ENCODE measurements at regions of chr11 and their contacts with region 1.

Region 1: GRCh38 chr11:95254131-95254704 is 23.2 kb upstream of the SESN3 start:
- DNase-seq: peak; percentile 77 to 81
- H3K4me3 ChIP-seq: peak overlapping the region; percentile 1; the same call in 1 of the 2 replicates
- H3K4me3 Mint-ChIP-seq: peak overlapping the region; percentile 67
- H3K27ac Mint-ChIP-seq: no peak overlapping the region
- H3K4me1 ChIP-seq: peaks cover 42% of the 10 kb centered on the region
- H3K4me1 Mint-ChIP-seq: peaks cover 30% of the 10 kb centered on the region
- H3K27me3 ChIP-seq: no peaks in the 10 kb centered on the region
- H3K27me3 Mint-ChIP-seq: no peaks in the 10 kb centered on the region
- CTCF ChIP-seq: no peak

Region 2: DNA sequence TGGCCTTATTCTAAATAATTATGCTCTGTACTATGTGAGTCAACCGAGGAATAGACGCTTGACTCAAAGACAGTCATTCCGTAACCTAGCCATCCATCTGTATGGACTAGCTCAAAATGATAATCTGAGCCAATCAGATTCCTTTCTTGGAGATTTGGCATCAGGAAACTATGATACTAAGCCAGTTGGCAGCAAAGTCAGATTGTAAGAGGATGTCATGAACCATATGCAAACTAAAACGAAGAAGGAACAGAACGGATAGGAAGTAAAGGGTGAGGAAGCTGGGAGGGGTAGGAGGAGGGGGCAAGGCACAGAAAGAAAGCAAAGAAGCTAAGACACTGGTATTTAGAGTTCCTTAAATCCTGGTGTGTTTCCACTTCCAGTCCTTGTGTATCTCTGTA is 12.5 kb before region 1 on chr11:
- CTCF ChIA-PET with region 1: interaction called, 3 read pairs
- POLR2A ChIA-PET with region 1: no interaction called
- intact Hi-C with region 1: loop called (anchors 1 kb)
- DNase-seq: no peak
- H3K4me3 ChIP-seq: no peak overlapping the region
- H3K4me3 Mint-ChIP-seq: no peak overlapping the region
- H3K27ac Mint-ChIP-seq: peak overlapping the region; percentile 72
- H3K4me1 ChIP-seq: peaks cover 45% of the 10 kb centered on the region
- H3K4me1 Mint-ChIP-seq: peaks cover 31% of the 10 kb centered on the region
- H3K27me3 ChIP-seq: no peaks in the 10 kb centered on the region
- H3K27me3 Mint-ChIP-seq: no peaks in the 10 kb centered on the region
- CTCF ChIP-seq: no peak

Region 3: DNA sequence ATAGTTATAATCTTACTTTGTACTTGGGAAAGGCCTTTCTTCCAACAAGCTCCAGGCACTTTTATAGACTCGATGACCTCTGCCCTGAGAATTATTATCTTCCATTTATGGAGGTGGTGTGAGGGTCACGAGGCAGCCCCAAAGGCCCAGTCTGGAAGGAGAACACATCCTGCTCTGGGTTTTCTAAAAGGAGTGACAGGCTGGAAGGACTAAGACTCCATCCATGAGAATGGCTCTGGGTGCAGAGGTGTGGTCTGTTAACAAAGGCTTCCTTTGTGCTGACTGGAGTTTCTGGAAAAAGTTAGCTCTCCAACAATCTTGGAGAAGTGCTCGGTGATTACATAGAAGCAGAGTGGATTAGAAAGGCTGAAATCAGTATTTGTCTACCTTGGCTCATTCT is 51.5 kb after region 1 on chr11:
- CTCF ChIA-PET with region 1: no interaction called
- POLR2A ChIA-PET with region 1: no interaction called
- intact Hi-C with region 1: loop called (anchors 2 kb)
- DNase-seq: no peak
- H3K4me3 ChIP-seq: no peak overlapping the region
- H3K4me3 Mint-ChIP-seq: no peak overlapping the region
- H3K27ac Mint-ChIP-seq: no peak overlapping the region
- H3K4me1 ChIP-seq: no peaks in the 10 kb centered on the region
- H3K4me1 Mint-ChIP-seq: no peaks in the 10 kb centered on the region
- H3K27me3 ChIP-seq: no peaks in the 10 kb centered on the region
- H3K27me3 Mint-ChIP-seq: no peaks in the 10 kb centered on the region
- CTCF ChIP-seq: no peak

Region 4: GRCh38 chr11:95322546-95322945 is 68.3 kb after region 1 on chr11:
- CTCF ChIA-PET with region 1: no interaction called
- POLR2A ChIA-PET with region 1: no interaction called
- intact Hi-C with region 1: no loop called
- DNase-seq: no peak
- H3K4me3 ChIP-seq: no peak overlapping the region
- H3K4me3 Mint-ChIP-seq: no peak overlapping the region
- H3K27ac Mint-ChIP-seq: no peak overlapping the region
- H3K4me1 ChIP-seq: no peaks in the 10 kb centered on the region
- H3K4me1 Mint-ChIP-seq: peaks cover 9% of the 10 kb centered on the region
- H3K27me3 ChIP-seq: no peaks in the 10 kb centered on the region
- H3K27me3 Mint-ChIP-seq: peaks cover 3% of the 10 kb centered on the region
- CTCF ChIP-seq: no peak

Region 5: DNA sequence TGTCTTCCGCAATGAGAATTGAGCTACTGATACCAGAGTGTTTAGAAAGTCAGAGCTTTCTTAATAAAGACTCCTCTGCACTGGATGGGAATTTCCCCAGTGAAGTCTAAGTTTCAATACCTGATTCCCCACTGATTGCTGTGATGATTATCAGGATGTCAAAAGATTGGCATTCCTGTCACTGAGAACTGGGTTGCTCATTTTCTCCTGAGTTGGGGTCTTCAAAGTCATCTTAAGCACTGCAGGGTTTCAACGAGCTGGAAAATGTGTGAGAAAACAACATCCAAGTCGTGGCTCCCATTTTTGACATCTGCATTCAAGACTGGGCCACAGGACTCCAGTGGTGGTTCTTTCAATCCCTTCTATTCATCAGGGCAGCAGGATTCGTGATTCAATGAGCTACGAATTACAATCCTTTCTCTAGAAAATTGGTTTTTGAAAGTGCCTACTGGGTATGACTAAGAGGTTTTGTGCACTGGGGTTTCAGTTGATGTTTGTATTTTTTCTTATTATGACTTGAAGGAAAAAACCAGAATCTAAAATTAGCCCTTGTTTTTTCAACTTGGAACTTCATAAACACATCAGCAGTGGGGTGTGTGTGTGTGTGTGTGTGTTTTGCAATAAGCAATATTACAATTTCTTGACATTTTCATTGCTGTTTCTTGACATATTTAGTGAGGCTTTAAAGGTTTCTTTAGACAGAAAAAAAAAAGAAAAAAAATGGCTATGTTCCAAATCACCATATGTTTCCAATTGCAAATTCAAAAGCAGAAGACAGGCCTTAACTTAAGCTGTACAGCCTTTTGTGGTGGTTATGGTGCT is 302.3 kb after region 1 on chr11:
- CTCF ChIA-PET with region 1: no interaction called
- POLR2A ChIA-PET with region 1: no interaction called
- intact Hi-C with region 1: no loop called
- DNase-seq: no peak
- H3K4me3 ChIP-seq: no peak overlapping the region
- H3K4me3 Mint-ChIP-seq: no peak overlapping the region
- H3K27ac Mint-ChIP-seq: no peak overlapping the region
- H3K4me1 ChIP-seq: no peaks in the 10 kb centered on the region
- H3K4me1 Mint-ChIP-seq: no peaks in the 10 kb centered on the region
- H3K27me3 ChIP-seq: no peaks in the 10 kb centered on the region
- H3K27me3 Mint-ChIP-seq: no peaks in the 10 kb centered on the region
- CTCF ChIP-seq: no peak